BJ (cell line): ENCODE measurements at regions of chr5 and their contacts with region 1.

Region 1: GRCh38 chr5:72451741-72452505 is 55.3 kb downstream of the ZNF366 start:
- DNase-seq: peak; percentile 92
- H3K4me3 ChIP-seq: no peak overlapping the region
- H3K27me3 ChIP-seq: no peaks in the 10 kb centered on the region
- CTCF ChIP-seq: no peak

Region 2: DNA sequence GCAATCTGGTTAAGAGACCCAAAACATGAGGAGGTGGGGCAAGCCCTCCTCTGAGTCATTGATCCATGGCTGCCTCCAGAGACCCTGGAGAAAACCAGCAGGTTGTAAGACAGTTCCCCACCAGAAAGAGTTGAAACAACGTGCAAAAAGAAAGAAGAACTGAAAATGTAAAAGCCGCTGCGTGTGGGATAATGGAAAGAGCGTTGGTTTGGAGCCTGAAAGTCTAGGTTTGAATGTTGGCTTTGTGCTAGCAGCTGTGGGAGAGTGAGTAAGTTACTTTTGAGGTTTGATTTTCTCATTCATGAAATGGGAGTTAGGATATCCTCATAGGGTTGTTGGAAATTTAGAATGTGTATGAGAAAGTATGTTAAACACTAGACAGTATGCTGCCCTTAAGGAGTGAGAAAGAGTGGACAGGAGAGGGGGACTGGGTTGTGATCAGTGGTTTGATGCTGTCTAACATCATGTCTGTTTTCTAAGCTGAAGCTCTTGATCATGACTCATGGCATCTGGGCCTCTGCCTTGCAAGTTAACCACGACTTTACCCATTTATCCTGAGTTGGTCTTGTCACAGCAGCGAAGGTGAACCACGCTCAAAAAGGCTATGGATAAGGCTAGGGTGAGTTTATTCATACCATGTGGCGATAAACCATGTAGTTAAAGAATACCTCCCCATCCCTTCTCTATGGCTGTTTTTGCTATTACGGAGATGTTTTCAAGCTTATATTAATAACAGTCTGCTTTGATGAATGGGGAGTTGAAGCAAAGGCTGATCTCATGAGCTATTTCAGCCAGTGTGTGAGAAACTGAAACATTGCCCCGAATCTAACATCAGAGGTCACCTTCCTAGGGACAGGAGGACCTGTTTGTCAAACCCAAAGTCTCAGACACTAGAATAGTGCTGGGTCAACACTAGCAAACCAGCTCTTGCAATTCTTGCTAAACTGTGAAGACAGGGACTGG is 14.0 kb after region 1 on chr5:
- CTCF ChIA-PET with region 1: interaction called, 19 read pairs
- POLR2A ChIA-PET with region 1: interaction called, 3 read pairs
- DNase-seq: no peak
- H3K4me3 ChIP-seq: no peak overlapping the region
- H3K27me3 ChIP-seq: no peaks in the 10 kb centered on the region
- CTCF ChIP-seq: no peak

Region 3: DNA sequence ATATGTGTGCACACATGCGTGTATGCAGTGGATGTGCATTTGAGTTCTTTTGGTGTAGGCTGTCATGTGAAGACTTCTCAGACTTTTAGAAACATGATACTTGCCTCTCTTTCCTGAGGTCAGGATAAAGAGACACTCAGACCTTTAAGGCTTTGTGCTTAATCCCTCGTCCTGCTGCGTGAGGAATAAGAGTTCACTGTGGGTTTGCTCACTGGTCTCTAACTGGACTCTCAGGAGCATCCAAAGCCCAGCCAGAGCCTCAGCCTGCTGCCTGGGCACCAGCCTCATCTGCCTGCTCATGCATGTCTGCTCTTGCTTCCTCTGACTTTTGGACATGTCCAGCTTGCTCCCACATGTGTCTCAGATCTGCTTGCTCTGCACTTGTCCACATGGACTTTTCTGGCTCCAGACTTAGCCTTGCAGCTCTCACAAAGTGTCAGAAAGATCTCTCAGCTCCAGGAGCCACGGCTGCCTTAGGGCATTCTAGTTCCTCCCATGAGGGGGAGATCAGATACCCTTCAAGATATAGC is 120.4 kb after region 1 on chr5:
- CTCF ChIA-PET with region 1: no interaction called
- POLR2A ChIA-PET with region 1: no interaction called
- DNase-seq: no peak
- H3K4me3 ChIP-seq: no peak overlapping the region
- H3K27me3 ChIP-seq: peaks cover 1% of the 10 kb centered on the region
- CTCF ChIP-seq: no peak